ENCODE measurements at regions of chr12 and their contacts with region 1.

Region 1: GRCh38 chr12:9687228-9687627 is 17.7 kb downstream of the CLEC2D start:
- ATAC-seq: peak in 2 of 8 experiments; percentile 90 to 97
- H3K4me3 ChIP-seq: no peak overlapping the region
- H3K27ac ChIP-seq: no peak overlapping the region
- H3K4me1 ChIP-seq: no peaks in the 10 kb centered on the region

Region 2: GRCh38 chr12:9331218-9331626 is 356.0 kb before region 1 on chr12:
- in situ Hi-C with region 1: loop called in 1 of 9 experiments (anchors 25 kb)
- ATAC-seq: peak; percentile 75 to 94 (median 80)
- H3K4me3 ChIP-seq: no peak overlapping the region
- H3K27ac ChIP-seq: no peak overlapping the region
- H3K4me1 ChIP-seq: peaks cover 0 to 6% of the 10 kb centered on the region in 2 donors

Region 3: DNA sequence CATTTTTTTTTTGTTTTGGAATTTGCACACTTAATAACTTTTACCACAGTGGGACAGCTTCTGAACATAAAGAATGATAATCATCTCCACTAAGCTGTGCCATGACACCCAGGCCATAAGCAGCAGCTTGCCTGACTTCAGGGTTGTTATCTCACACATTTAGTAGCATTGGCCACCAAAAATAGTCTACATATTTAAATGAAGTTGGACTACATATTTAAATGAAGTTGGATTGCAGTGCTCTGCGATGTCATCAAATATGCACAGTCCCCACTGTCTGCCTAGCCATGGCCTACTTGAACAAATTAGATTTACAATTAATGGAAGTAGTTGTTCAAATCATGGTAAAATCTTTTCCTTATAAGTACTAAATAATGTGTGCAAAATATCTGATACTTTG is 180.5 kb before region 1 on chr12:
- in situ Hi-C with region 1: no loop called
- ATAC-seq: peak in 3 of 8 experiments; percentile 66 to 76 (median 69)
- H3K4me3 ChIP-seq: no peak overlapping the region
- H3K27ac ChIP-seq: no peak overlapping the region
- H3K4me1 ChIP-seq: no peaks in the 10 kb centered on the region

Measured in motor neuron (in vitro differentiated cells).